Left ventricle myocardium inferior (tissue), 1 donor: ENCODE measurements at regions of chr1 and their contacts with region 1.

Region 1: DNA sequence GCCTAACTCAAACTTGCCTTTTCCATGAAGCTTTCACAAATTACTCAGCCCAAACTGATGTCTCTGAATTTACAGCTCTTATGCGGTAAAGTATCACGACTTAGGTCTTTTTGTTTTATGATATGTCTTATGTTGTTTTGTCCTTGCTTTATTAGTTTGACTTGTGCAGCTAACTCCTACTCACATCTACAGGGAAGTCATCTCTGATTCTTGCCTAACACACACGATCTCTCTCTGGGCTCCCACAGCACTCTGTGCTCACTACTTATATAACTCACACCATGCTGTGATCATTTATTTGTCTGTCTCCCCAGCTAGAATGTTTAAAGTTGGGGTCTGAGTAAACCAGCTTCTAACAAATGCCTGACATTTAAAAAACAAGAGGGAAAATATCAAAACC is 9.3 kb upstream of the PI4KB start:
- DNase-seq: no peak
- H3K4me3 ChIP-seq: no peak overlapping the region
- H3K27ac ChIP-seq: no peak overlapping the region
- H3K4me1 ChIP-seq: no peaks in the 10 kb centered on the region
- H3K27me3 ChIP-seq: no peaks in the 10 kb centered on the region
- CTCF ChIP-seq: no peak

Region 2: GRCh38 chr1:151059078-151059907 is 277.3 kb before region 1 on chr1 and contains the start of gene CDC42SE1:
- intact Hi-C with region 1: no loop called
- DNase-seq: peak; percentile 86
- H3K4me3 ChIP-seq: peak within 1 kb of the TSS; percentile 92
- H3K27ac ChIP-seq: peak within 1 kb of the TSS; percentile 96
- H3K4me1 ChIP-seq: peaks cover 59% of the 10 kb centered on the region
- H3K27me3 ChIP-seq: no peaks in the 10 kb centered on the region
- CTCF ChIP-seq: peak; percentile 96
- total RNA-seq, gene CDC42SE1: 24.8 TPM

Region 3: DNA sequence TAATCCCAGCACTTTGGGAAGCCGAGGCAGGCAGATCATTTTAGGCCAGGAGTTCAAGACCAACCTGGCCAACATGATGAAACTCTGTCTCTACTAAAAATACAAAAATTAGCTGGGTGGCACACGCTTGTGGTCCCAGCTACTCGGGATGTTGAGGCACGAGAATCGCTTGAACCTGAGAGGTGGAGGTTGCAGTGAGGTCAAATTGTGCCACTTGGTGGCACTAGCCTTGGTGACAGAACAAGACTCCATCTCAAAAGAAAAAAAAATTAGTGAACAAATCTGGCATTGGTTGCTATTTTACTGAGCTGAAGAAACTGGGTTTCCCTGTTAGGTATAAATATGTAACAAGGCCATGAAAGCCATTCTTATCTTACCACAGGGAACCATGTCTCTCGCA is 108.9 kb before region 1 on chr1:
- intact Hi-C with region 1: no loop called
- DNase-seq: no peak
- H3K4me3 ChIP-seq: no peak overlapping the region
- H3K27ac ChIP-seq: no peak overlapping the region
- H3K4me1 ChIP-seq: peaks cover 2% of the 10 kb centered on the region
- H3K27me3 ChIP-seq: no peaks in the 10 kb centered on the region
- CTCF ChIP-seq: no peak

Region 4: GRCh38 chr1:151238467-151238739 is 98.2 kb before region 1 on chr1:
- intact Hi-C with region 1: no loop called
- DNase-seq: no peak
- H3K4me3 ChIP-seq: no peak overlapping the region
- H3K27ac ChIP-seq: no peak overlapping the region
- H3K4me1 ChIP-seq: no peaks in the 10 kb centered on the region
- H3K27me3 ChIP-seq: no peaks in the 10 kb centered on the region
- CTCF ChIP-seq: no peak

Region 5: DNA sequence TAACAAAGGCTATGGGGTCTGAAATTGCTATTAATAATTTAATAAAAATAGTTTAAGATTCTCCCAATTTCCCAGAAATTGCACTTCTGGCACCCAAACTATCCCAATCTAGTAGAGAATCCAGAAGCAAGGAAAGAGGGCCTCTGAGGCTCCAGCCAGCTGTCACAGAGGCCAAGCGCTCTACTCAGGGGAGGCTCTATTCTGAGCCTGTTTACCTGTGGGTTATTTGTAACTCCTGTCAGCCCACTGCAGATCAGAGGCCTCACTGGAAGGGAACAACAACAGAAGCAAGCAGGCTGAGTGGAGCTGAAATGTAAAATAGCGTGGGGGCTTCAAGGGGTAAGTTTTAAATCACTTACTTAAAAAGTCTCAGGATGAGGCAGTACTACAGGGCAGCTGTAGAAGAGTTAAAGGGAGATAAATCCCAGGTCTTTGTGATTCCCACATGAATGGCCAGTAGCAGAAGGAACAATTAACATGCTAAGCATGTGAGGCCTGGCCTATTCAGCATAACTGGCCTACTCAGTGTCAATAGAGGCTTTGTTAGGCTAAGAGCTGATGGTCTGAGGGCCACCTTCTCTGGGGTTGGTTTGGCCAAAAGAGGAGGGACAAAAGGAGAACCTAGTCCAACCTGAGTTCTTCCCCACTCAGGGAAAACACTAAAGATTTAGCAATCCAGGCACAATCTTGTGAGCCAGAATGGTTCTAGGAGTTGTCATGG is 41.7 kb before region 1 on chr1:
- intact Hi-C with region 1: loop called (anchors 5 kb)
- DNase-seq: no peak
- H3K4me3 ChIP-seq: no peak overlapping the region
- H3K27ac ChIP-seq: no peak overlapping the region
- H3K4me1 ChIP-seq: no peaks in the 10 kb centered on the region
- H3K27me3 ChIP-seq: no peaks in the 10 kb centered on the region
- CTCF ChIP-seq: no peak